Endothelial cell of umbilical vein (primary cell): ENCODE measurements at regions of chr19 and their contacts with region 1.

Region 1: GRCh38 chr19:4328243-4328990 is 10.2 kb downstream of the STAP2 start:
- DNase-seq: peak; percentile 82
- H3K4me3 ChIP-seq: peak overlapping the region in 2 of 3 experiments; percentile 2 to 24
- H3K27ac ChIP-seq: no peak overlapping the region
- H3K4me1 ChIP-seq: peaks cover 3% of the 10 kb centered on the region
- H3K27me3 ChIP-seq: no peaks in the 10 kb centered on the region
- CTCF ChIP-seq: no peak
- POLR2A ChIP-seq: peak; percentile 48

Region 2: GRCh38 chr19:4342615-4343369 is 14.4 kb after region 1 on chr19:
- CTCF ChIA-PET with region 1: interaction called, 7 read pairs
- POLR2A ChIA-PET with region 1: interaction called, 6 read pairs
- dilution Hi-C with region 1: no loop called
- intact Hi-C with region 1: loop called (anchors 1 kb)
- DNase-seq: peak; percentile 100
- H3K4me3 ChIP-seq: peak overlapping the region; percentile 55 to 85 (median 84)
- H3K27ac ChIP-seq: peak overlapping the region; percentile 77
- H3K4me1 ChIP-seq: peaks cover 16% of the 10 kb centered on the region
- H3K27me3 ChIP-seq: no peaks in the 10 kb centered on the region
- CTCF ChIP-seq: peak in 1 of 2 donors; percentile 47
- POLR2A ChIP-seq: peak; percentile 96

Region 3: GRCh38 chr19:4400135-4400936 is 71.9 kb after region 1 on chr19 and contains the start of gene SH3GL1:
- CTCF ChIA-PET with region 1: no interaction called
- POLR2A ChIA-PET with region 1: no interaction called
- dilution Hi-C with region 1: no loop called
- intact Hi-C with region 1: no loop called
- DNase-seq: peak; percentile 88
- H3K4me3 ChIP-seq: peak within 1 kb of the TSS; percentile 76 to 98 (median 91)
- H3K27ac ChIP-seq: peak within 1 kb of the TSS; percentile 95
- H3K4me1 ChIP-seq: peaks cover 28% of the 10 kb centered on the region
- H3K27me3 ChIP-seq: no peaks in the 10 kb centered on the region
- CTCF ChIP-seq: peak; percentile 95 to 99
- POLR2A ChIP-seq: peak; percentile 39
- total RNA-seq, gene SH3GL1: 143 and 153 TPM in 2 replicates